ENCODE measurements at regions of chr10 and their contacts with region 1.

Region 1: DNA sequence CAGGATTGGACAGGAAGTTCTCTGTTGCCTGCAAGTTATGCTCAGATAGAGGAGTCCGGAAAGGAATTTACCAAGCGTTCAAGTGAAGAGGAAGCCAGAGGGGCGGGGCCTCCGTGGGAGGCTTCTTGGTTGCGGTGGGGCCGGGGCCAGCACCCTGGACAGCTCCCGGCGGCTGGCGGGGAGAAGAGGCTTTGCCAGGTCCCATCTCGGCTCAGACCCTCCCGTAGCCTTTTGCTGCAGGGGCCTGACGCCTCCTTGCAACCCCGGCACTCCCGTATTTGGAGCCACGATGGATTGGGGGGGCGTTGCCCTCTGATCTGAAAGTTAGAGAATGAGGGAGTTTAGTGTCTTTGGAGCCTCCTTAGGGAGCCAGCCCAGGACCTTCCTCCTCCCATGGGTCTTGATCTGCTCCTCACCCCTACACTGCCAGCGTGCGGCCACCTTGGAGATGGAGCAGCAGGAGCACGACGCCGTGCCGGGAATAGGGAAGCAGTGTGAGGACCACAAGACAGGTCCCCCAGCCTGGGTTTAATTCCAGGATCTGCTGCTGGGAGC is 3.1 kb upstream of the SLC18A3 start:
- DNase-seq: peak; percentile 82 to 88
- ATAC-seq: peak; percentile 80
- H3K4me3 ChIP-seq: no peak overlapping the region
- H3K27ac ChIP-seq: no peak overlapping the region
- H3K4me1 ChIP-seq: no peaks in the 10 kb centered on the region
- H3K27me3 ChIP-seq: peaks cover 0 to 6% of the 10 kb centered on the region in 2 donors

Region 2: DNA sequence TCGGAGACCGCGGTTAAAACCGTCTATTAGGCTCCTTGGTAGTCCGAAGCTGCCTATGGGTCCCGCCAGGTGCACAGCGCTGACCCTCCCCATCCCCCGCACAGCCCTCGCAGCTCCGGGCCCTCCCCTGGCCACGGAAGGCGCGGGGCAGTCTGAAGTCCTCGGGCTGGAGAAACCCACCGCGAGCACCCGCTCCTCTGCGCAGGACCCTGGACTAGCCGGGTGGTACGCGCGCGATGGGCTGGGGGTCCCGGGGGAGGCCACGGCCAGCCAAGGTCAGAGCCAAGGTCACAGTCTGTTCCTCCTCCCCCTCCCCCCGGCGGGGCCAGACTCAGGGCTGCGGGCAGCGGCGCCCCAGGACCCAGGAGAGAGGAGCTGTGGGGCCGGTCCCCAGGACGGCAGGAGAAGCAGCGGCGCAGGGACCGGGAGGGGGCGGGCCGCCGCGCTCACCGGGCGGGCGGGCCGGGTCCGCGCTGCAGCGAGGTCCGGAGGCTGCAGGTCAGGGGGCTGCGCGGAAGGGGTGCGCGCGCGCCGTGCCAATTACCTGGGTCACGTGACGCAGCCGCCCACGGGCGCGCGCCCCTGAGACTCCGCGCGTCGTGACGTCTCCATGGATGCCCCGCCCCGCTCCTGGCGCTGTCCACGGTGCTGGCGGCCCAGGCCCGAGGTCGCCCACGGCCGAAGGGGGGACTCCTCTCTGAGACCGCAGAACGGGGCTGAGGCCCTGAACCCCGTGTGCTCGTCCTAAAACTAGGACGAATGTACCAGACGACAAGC is 154.9 kb after region 1 on chr10 and contains the start of gene OGDHL:
- intact Hi-C with region 1: loop called in 1 of 2 experiments (anchors 10 kb)
- DNase-seq: peak in 1 of 2 donors; percentile 63
- ATAC-seq: peak; percentile 47
- H3K4me3 ChIP-seq: peak within 1 kb of the TSS; percentile 13 to 17
- H3K27ac ChIP-seq: no peak within 1 kb of the TSS
- H3K4me1 ChIP-seq: no peaks in the 10 kb centered on the region
- H3K27me3 ChIP-seq: no peaks in the 10 kb centered on the region
- total RNA-seq, gene OGDHL: not detected

Region 3: GRCh38 chr10:49817845-49818244 is 210.8 kb after region 1 on chr10:
- intact Hi-C with region 1: no loop called
- DNase-seq: no peak
- ATAC-seq: no peak
- H3K4me3 ChIP-seq: no peak overlapping the region
- H3K27ac ChIP-seq: no peak overlapping the region
- H3K4me1 ChIP-seq: no peaks in the 10 kb centered on the region
- H3K27me3 ChIP-seq: no peaks in the 10 kb centered on the region